ENCODE measurements at regions of chr12 and their contacts with region 1.

Region 1: GRCh38 chr12:89949457-89950195 is 241.0 kb upstream of the ATP2B1 start:
- DNase-seq: no peak
- ATAC-seq: peak; percentile 70
- H3K4me3 Mint-ChIP-seq: peak overlapping the region; percentile 64
- H3K27ac Mint-ChIP-seq: peak overlapping the region; percentile 90
- H3K4me1 Mint-ChIP-seq: peaks cover 62% of the 10 kb centered on the region
- H3K27me3 Mint-ChIP-seq: no peaks in the 10 kb centered on the region
- CTCF ChIP-seq: no peak

Region 2: DNA sequence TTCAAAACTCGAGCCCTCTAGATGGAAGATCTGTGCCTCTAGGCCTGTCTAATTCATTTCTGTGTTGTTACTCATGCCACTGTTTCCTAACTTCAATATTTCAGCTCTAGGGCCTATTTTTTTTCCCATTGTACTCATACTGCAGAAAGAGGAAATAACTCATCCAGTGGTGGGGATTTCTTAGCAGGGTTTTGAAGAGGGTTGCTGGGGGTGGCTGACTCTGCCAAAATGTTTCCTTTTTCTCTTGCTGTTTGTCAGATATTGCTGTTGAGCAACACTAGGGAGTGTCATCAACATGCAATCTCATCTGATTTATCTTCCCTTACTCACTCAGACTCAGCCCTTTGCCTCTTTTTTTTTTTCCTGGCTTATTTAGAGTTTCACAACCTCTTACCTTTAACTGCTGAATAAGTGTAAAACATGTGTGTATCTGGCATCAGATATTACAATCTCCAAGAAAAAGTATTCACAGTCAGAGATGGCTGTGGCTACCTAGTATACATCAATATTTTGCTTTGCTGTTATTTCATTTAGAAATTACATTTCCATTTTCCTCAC is 786.8 kb before region 1 on chr12:
- CTCF ChIA-PET with region 1: no interaction called
- POLR2A ChIA-PET with region 1: no interaction called
- intact Hi-C with region 1: loop called (anchors 10 kb)
- DNase-seq: no peak
- ATAC-seq: peak; percentile 56
- H3K4me3 Mint-ChIP-seq: no peak overlapping the region
- H3K27ac Mint-ChIP-seq: no peak overlapping the region
- H3K4me1 Mint-ChIP-seq: peaks cover 28% of the 10 kb centered on the region
- H3K27me3 Mint-ChIP-seq: no peaks in the 10 kb centered on the region
- CTCF ChIP-seq: no peak

Region 3: GRCh38 chr12:89721291-89721987 is 228.2 kb before region 1 on chr12:
- CTCF ChIA-PET with region 1: no interaction called
- POLR2A ChIA-PET with region 1: no interaction called
- intact Hi-C with region 1: loop called (anchors 1 kb)
- DNase-seq: no peak
- ATAC-seq: peak; percentile 86
- H3K4me3 Mint-ChIP-seq: peak overlapping the region; percentile 72
- H3K27ac Mint-ChIP-seq: peak overlapping the region; percentile 95
- H3K4me1 Mint-ChIP-seq: peaks cover 39% of the 10 kb centered on the region
- H3K27me3 Mint-ChIP-seq: no peaks in the 10 kb centered on the region
- CTCF ChIP-seq: no peak

Region 4: GRCh38 chr12:89856431-89856830 is 93.2 kb before region 1 on chr12:
- CTCF ChIA-PET with region 1: interaction called, 5 read pairs
- POLR2A ChIA-PET with region 1: interaction called, 6 read pairs
- intact Hi-C with region 1: loop called (anchors 1 kb)
- DNase-seq: no peak
- ATAC-seq: peak; percentile 86
- H3K4me3 Mint-ChIP-seq: peak overlapping the region; percentile 68
- H3K27ac Mint-ChIP-seq: peak overlapping the region; percentile 91
- H3K4me1 Mint-ChIP-seq: peaks cover 64% of the 10 kb centered on the region
- H3K27me3 Mint-ChIP-seq: no peaks in the 10 kb centered on the region
- CTCF ChIP-seq: no peak

Region 5: DNA sequence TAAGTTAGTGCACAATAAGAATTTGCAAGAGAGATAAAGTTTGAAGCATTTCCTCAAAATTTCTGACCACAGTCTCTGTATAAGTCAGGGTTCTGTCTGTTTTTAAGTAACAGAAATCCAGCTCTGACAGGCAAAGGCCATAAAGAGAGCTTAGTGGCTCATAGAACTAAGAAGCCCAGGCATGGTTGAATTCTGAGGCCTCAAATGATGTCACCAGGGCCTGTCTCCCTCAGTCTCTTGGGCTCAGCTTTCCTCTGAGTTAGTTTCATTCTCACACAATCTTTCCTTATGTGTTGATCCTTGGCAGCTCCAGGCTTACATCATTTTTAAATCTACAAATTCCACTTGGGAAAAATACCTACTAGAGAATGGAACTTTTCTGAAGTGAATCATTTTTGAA is 67.6 kb before region 1 on chr12:
- CTCF ChIA-PET with region 1: interaction called, 3 read pairs
- POLR2A ChIA-PET with region 1: interaction called, 17 read pairs
- intact Hi-C with region 1: loop called (anchors 1 kb)
- DNase-seq: no peak
- ATAC-seq: peak; percentile 52
- H3K4me3 Mint-ChIP-seq: peak overlapping the region; percentile 76
- H3K27ac Mint-ChIP-seq: peak overlapping the region; percentile 97
- H3K4me1 Mint-ChIP-seq: peaks cover 62% of the 10 kb centered on the region
- H3K27me3 Mint-ChIP-seq: no peaks in the 10 kb centered on the region
- CTCF ChIP-seq: no peak

Region 6: GRCh38 chr12:89935825-89936224 is 13.8 kb before region 1 on chr12:
- CTCF ChIA-PET with region 1: interaction called, 15 read pairs
- POLR2A ChIA-PET with region 1: interaction called, 6 read pairs
- intact Hi-C with region 1: loop called (anchors 1 kb)
- DNase-seq: no peak
- ATAC-seq: peak; percentile 77
- H3K4me3 Mint-ChIP-seq: peak overlapping the region; percentile 61
- H3K27ac Mint-ChIP-seq: peak overlapping the region; percentile 92
- H3K4me1 Mint-ChIP-seq: peaks cover 66% of the 10 kb centered on the region
- H3K27me3 Mint-ChIP-seq: no peaks in the 10 kb centered on the region
- CTCF ChIP-seq: no peak

Region 7: GRCh38 chr12:90013409-90013808 is 63.8 kb after region 1 on chr12:
- CTCF ChIA-PET with region 1: interaction called, 3 read pairs
- POLR2A ChIA-PET with region 1: no interaction called
- intact Hi-C with region 1: loop called (anchors 1 kb)
- DNase-seq: no peak
- ATAC-seq: peak; percentile 90
- H3K4me3 Mint-ChIP-seq: no peak overlapping the region
- H3K27ac Mint-ChIP-seq: no peak overlapping the region
- H3K4me1 Mint-ChIP-seq: peaks cover 16% of the 10 kb centered on the region
- H3K27me3 Mint-ChIP-seq: no peaks in the 10 kb centered on the region
- CTCF ChIP-seq: no peak